ENCODE measurements at regions of chr21 and their contacts with region 1.

Region 1: GRCh38 chr21:35051287-35051818 is 2.3 kb upstream of the RUNX1 start:
- DNase-seq: peak; percentile 94
- H3K4me3 Mint-ChIP-seq: peak overlapping the region; percentile 89
- H3K27ac Mint-ChIP-seq: peak overlapping the region; percentile 94
- H3K4me1 Mint-ChIP-seq: peaks cover 57% of the 10 kb centered on the region
- H3K27me3 Mint-ChIP-seq: peaks cover 4% of the 10 kb centered on the region

Region 2: DNA sequence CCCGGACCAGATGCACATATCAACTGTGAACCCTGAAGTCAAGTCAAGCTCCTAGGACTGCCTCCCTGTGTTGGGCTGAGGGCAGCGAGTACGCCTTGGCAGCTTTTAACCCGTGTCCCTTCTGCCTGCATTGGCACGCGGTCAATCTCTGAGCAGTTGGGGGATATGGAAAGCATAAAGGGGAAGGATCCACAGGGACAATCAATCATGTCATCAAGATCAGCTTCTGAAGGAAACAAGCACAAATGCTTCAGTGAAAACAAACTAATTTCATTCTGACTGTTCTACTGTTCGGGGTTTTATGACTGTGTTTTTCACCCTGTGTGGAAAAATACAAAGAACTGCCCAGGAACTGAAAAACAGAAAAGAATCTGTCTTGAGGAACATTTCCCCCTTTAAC is 108.4 kb before region 1 on chr21:
- intact Hi-C with region 1: loop called (anchors 2 kb)
- DNase-seq: no peak
- H3K4me3 Mint-ChIP-seq: peak overlapping the region; percentile 47
- H3K27ac Mint-ChIP-seq: peak overlapping the region; percentile 94
- H3K4me1 Mint-ChIP-seq: peaks cover 75% of the 10 kb centered on the region
- H3K27me3 Mint-ChIP-seq: no peaks in the 10 kb centered on the region

Region 3: DNA sequence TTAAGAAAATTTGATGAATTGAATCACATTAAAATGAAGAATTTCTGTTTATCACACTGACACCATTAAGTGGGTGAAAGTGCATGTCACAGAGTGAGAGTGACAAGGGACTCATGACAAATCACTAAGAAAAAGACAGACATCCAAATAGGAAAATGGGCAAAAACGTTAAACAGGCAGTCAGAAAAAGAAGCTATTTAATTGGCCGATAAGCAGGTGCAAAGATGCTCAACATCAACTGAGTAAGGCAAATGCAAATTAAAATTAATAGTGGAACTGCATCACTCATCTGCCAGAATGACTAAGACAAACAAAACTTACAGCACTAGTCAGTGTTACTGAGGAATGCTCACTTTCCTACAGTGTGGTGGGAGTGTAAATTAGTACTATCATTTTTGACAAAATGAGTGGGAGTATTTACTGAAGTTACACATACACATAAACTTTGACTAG is 37.0 kb after region 1 on chr21:
- intact Hi-C with region 1: loop called (anchors 1 kb)
- DNase-seq: no peak
- H3K4me3 Mint-ChIP-seq: no peak overlapping the region
- H3K27ac Mint-ChIP-seq: peak overlapping the region; percentile 96
- H3K4me1 Mint-ChIP-seq: peaks cover 30% of the 10 kb centered on the region
- H3K27me3 Mint-ChIP-seq: no peaks in the 10 kb centered on the region

Region 4: GRCh38 chr21:35150562-35151226 is 99.3 kb after region 1 on chr21:
- intact Hi-C with region 1: loop called (anchors 1 kb)
- DNase-seq: no peak
- H3K4me3 Mint-ChIP-seq: peak overlapping the region; percentile 48
- H3K27ac Mint-ChIP-seq: peak overlapping the region; percentile 92
- H3K4me1 Mint-ChIP-seq: peaks cover 33% of the 10 kb centered on the region
- H3K27me3 Mint-ChIP-seq: no peaks in the 10 kb centered on the region

Region 5: GRCh38 chr21:35342440-35342839 is 291.1 kb after region 1 on chr21:
- intact Hi-C with region 1: loop called (anchors 2 kb)
- DNase-seq: no peak
- H3K4me3 Mint-ChIP-seq: peak overlapping the region; percentile 53
- H3K27ac Mint-ChIP-seq: peak overlapping the region; percentile 88
- H3K4me1 Mint-ChIP-seq: peaks cover 41% of the 10 kb centered on the region
- H3K27me3 Mint-ChIP-seq: no peaks in the 10 kb centered on the region